ENCODE measurements at regions of chr10 and their contacts with region 1.

Region 1: DNA sequence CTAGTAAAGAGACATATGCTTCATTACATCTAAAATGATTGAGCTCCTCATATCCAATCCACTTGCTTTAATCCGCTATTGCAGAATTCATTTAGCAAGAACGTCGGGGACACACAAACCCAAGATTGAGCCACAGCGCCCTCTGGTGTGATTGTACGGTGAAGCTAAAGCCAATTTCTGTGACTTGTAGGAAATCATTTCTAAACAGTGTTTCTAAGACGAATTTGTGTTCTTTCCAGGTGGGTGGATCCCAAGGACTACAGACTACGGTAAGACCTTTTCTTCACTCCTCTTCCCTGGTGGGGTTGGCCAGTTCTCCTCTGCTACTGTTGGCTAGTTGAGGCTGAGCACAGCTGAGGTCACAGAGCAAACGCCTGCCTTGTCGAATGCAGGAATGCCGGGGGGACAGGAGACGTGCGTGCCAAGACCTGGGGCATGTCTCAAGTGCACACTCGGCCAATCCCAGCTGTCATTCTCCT is 5.2 kb downstream of the DMBT1 start:
- DNase-seq: peak; percentile 72
- H3K4me3 Mint-ChIP-seq: no peak overlapping the region
- H3K27ac Mint-ChIP-seq: no peak overlapping the region
- H3K4me1 Mint-ChIP-seq: peaks cover 16% of the 10 kb centered on the region
- H3K27me3 Mint-ChIP-seq: peaks cover 36% of the 10 kb centered on the region
- CTCF ChIP-seq: peak; percentile 55

Region 2: GRCh38 chr10:122342293-122343134 is 223.3 kb before region 1 on chr10:
- CTCF ChIA-PET with region 1: no interaction called
- intact Hi-C with region 1: no loop called
- DNase-seq: peak; percentile 51
- H3K4me3 Mint-ChIP-seq: no peak overlapping the region
- H3K27ac Mint-ChIP-seq: no peak overlapping the region
- H3K4me1 Mint-ChIP-seq: peaks cover 19% of the 10 kb centered on the region
- H3K27me3 Mint-ChIP-seq: no peaks in the 10 kb centered on the region
- CTCF ChIP-seq: peak; percentile 41

Region 3: GRCh38 chr10:122446668-122447423 is 118.9 kb before region 1 on chr10:
- CTCF ChIA-PET with region 1: interaction called, 3 read pairs
- intact Hi-C with region 1: loop called (anchors 10 kb)
- DNase-seq: no peak
- H3K4me3 Mint-ChIP-seq: no peak overlapping the region
- H3K27ac Mint-ChIP-seq: no peak overlapping the region
- H3K4me1 Mint-ChIP-seq: no peaks in the 10 kb centered on the region
- H3K27me3 Mint-ChIP-seq: no peaks in the 10 kb centered on the region
- CTCF ChIP-seq: no peak

Region 4: GRCh38 chr10:122525788-122526187 is 40.0 kb before region 1 on chr10:
- CTCF ChIA-PET with region 1: interaction called, 7 read pairs
- intact Hi-C with region 1: loop called (anchors 1 kb)
- DNase-seq: peak; percentile 57
- H3K4me3 Mint-ChIP-seq: no peak overlapping the region
- H3K27ac Mint-ChIP-seq: no peak overlapping the region
- H3K4me1 Mint-ChIP-seq: no peaks in the 10 kb centered on the region
- H3K27me3 Mint-ChIP-seq: peaks cover 46% of the 10 kb centered on the region
- CTCF ChIP-seq: peak; percentile 53

Region 5: DNA sequence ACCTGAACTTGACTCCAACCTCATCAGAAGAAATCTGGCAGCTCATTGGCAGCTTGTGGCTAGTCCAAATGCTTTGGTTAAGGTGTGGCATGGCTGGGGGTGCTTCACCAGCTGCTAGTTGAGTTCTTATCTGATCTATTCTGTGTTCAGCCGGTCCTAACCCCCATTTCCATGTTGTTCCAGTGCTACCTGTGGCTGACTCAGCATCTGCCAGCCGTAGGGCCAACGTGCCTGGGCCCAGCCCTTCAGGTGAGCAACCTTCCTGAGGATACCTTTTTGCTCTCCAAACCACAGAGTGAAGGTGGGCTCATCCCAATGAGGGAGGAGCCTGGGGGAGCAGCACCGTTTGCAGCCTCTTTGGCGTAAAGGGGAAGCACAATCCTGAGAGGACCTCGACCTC is 180.6 kb after region 1 on chr10:
- CTCF ChIA-PET with region 1: no interaction called
- intact Hi-C with region 1: no loop called
- DNase-seq: no peak
- H3K4me3 Mint-ChIP-seq: no peak overlapping the region
- H3K27ac Mint-ChIP-seq: no peak overlapping the region
- H3K4me1 Mint-ChIP-seq: no peaks in the 10 kb centered on the region
- H3K27me3 Mint-ChIP-seq: peaks cover 56% of the 10 kb centered on the region
- CTCF ChIP-seq: no peak

Measured in Calu3 (cell line).